Activated CD4-positive, alpha-beta T cell treated with anti-CD3 and anti-CD28 coated beads, Interleukin-2, amount 10 ng/mL, durations not matched to agents 24 days and 14 days (primary cell): ENCODE measurements at regions of chr2 and their contacts with region 1.

Region 1: GRCh38 chr2:148644883-148645538 is 460 bp downstream of the EPC2 start:
- DNase-seq: peak; percentile 98
- H3K4me3 Mint-ChIP-seq: peak overlapping the region; percentile 86
- H3K27ac Mint-ChIP-seq: peak overlapping the region; percentile 98
- H3K4me1 Mint-ChIP-seq: peaks cover 31% of the 10 kb centered on the region
- H3K27me3 Mint-ChIP-seq: peaks cover 14% of the 10 kb centered on the region

Region 2: DNA sequence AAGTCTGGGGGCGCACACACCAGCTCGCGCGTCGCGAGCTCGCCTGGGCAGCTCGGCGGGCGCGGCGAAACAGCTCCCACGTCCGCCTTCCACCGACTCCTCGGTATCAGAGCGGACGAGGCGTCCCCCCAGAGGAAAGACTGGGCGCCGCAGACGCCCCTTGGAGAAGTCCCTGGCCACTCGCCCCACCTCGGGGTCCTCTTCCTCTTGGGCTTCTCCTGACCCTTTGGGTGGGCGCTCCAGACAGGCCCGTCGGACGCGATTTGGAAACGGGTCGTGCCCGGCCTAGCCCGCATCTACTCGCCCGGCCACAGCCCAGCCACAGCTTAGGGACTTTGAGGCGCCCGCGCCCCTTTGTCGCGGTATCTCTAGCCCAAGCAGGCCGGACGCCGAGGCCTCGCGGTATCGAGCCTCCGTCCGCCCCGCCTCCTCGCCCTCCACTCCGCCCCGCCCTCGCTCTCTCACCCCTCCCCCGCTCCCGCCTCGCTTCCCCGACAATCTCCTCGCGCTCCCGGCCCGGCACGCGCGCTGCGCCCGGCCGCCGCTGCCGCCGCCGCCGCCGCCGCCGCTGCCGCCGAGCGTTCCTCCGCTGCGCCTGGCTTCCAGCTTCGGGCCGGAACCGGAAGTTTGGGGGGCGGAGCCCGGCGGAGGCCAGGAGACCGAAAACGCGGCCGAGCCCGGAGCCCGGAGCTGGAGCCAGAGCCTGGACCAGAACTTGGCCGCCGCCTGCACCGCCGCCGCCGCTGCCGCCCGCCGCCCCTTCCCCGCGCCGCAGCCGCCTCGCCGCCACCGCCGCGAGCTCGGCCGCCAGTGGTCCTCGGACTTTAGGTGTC is 800.9 kb before region 1 on chr2:
- intact Hi-C with region 1: loop called (anchors 5 kb)
- DNase-seq: peak; percentile 96
- H3K4me3 Mint-ChIP-seq: peak overlapping the region; percentile 93
- H3K27ac Mint-ChIP-seq: peak overlapping the region; percentile 88
- H3K4me1 Mint-ChIP-seq: peaks cover 26% of the 10 kb centered on the region
- H3K27me3 Mint-ChIP-seq: peaks cover 54% of the 10 kb centered on the region

Region 3: GRCh38 chr2:148524519-148524919 is 120.5 kb before region 1 on chr2:
- intact Hi-C with region 1: loop called (anchors 1 kb)
- DNase-seq: peak; percentile 89
- H3K4me3 Mint-ChIP-seq: peak overlapping the region; percentile 44
- H3K27ac Mint-ChIP-seq: peak overlapping the region; percentile 94
- H3K4me1 Mint-ChIP-seq: peaks cover 67% of the 10 kb centered on the region
- H3K27me3 Mint-ChIP-seq: no peaks in the 10 kb centered on the region

Region 4: DNA sequence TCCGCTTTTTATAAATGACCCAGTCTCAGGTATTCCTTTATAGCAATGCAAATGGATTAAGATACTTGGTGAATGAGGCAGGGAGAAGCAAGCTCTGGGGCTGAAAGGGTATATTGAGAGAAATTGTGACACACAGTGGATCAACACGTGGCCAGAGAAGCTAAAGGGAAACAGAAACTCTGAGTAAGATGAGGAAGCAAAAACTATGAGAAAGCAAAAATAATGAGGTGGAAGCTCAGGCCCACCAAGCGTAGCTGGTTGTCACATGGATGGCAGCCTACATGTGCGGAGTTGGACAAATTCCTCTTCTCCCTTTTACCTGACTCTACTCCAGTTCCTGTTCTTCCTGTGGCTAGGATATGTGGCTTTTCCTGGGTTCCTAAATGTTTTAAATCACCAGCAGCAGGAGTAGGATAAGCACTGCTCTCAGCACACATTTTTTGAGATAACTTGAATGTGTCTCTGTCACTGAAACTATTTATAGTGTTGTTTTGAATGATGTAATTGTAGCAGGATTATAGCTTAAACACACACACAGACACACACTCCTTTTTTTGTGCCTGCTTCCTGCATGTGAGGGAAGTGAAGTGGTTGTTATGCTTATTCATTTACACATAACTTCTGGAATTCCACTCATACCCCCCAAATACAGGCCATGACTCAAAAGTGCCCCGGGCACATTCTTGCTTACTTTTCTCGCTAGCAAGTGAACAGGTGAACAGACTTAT is 30.5 kb before region 1 on chr2:
- intact Hi-C with region 1: loop called (anchors 1 kb)
- DNase-seq: peak; percentile 67
- H3K4me3 Mint-ChIP-seq: peak overlapping the region; percentile 32
- H3K27ac Mint-ChIP-seq: peak overlapping the region; percentile 62
- H3K4me1 Mint-ChIP-seq: peaks cover 13% of the 10 kb centered on the region
- H3K27me3 Mint-ChIP-seq: no peaks in the 10 kb centered on the region

Region 5: GRCh38 chr2:148813603-148814065 is 168.6 kb after region 1 on chr2:
- intact Hi-C with region 1: loop called (anchors 5 kb)
- DNase-seq: peak; percentile 85
- H3K4me3 Mint-ChIP-seq: no peak overlapping the region
- H3K27ac Mint-ChIP-seq: peak overlapping the region; percentile 78
- H3K4me1 Mint-ChIP-seq: peaks cover 17% of the 10 kb centered on the region
- H3K27me3 Mint-ChIP-seq: peaks cover 24% of the 10 kb centered on the region

Region 6: DNA sequence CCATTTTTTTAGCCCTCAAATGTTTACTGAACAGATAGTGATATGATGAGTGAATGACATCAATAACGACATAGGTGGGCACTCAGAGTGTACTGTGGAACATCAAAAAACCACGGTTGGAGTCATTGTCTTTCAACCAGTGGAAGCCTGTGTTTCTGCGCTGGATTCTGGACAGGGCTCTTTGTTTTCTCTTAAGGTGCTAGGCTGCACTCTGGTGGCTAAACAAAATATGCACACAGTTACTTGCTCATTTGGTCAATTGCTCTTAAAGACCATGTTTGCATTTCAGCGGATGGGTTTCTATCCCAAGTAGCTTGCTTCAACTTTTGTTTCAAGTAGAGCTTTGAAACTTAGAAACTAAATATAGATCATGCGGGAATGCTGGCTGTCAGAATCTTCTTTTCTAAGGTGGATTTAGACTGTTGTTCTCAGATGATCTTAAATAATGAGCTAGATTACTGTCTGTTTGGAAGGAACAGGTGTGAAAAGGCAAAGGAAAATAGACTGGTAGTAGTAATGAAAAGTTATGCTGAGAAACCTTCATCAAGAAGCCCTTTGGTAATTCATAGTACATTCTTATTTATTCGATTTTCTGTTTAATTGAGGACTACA is 345.0 kb after region 1 on chr2:
- intact Hi-C with region 1: loop called (anchors 10 kb)
- DNase-seq: peak; percentile 87
- H3K4me3 Mint-ChIP-seq: no peak overlapping the region
- H3K27ac Mint-ChIP-seq: no peak overlapping the region
- H3K4me1 Mint-ChIP-seq: peaks cover 2% of the 10 kb centered on the region
- H3K27me3 Mint-ChIP-seq: no peaks in the 10 kb centered on the region